Activated CD4-positive, alpha-beta T cell treated with anti-CD3 and anti-CD28 coated beads, Interleukin-2, amount 10 ng/mL, durations not matched to agents 24 days and 14 days (primary cell): ENCODE measurements at regions of chr5 and their contacts with region 1.

Region 1: GRCh38 chr5:95261437-95262175 is 23.3 kb downstream of the MCTP1 start:
- DNase-seq: no peak
- H3K4me3 Mint-ChIP-seq: no peak overlapping the region
- H3K27ac Mint-ChIP-seq: no peak overlapping the region
- H3K4me1 Mint-ChIP-seq: no peaks in the 10 kb centered on the region
- H3K27me3 Mint-ChIP-seq: peaks cover 3% of the 10 kb centered on the region

Region 2: DNA sequence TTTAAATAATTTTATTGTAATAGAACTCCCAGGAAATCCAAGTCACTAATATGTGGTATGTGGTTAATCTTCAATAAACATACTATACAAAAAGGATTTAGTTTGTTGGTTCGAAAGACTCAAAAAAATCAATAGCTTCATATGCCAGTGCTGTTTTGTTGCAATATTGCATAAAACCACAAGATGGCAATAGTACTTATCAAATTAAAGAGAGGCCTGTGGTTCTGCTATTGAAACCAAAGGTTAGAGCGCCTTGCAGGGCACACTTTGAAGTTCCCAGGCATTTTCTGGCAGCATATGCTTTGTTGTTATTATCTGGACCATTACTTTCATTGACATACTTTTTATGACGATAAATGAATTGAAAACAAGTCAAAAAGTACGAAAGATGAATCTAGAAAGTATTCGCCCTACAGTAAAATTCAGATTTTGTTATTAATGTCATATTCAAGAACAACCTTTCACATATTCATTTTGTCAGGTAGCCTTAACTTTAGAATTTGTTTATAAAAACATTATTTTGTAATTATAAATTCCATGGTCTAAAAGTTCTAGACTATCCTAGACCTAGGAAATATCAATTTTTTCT is 293.0 kb before region 1 on chr5:
- intact Hi-C with region 1: loop called (anchors 2 kb)
- DNase-seq: peak; percentile 73
- H3K4me3 Mint-ChIP-seq: no peak overlapping the region
- H3K27ac Mint-ChIP-seq: no peak overlapping the region
- H3K4me1 Mint-ChIP-seq: no peaks in the 10 kb centered on the region
- H3K27me3 Mint-ChIP-seq: no peaks in the 10 kb centered on the region